ENCODE measurements at regions of chr2 and their contacts with region 1.

Region 1: DNA sequence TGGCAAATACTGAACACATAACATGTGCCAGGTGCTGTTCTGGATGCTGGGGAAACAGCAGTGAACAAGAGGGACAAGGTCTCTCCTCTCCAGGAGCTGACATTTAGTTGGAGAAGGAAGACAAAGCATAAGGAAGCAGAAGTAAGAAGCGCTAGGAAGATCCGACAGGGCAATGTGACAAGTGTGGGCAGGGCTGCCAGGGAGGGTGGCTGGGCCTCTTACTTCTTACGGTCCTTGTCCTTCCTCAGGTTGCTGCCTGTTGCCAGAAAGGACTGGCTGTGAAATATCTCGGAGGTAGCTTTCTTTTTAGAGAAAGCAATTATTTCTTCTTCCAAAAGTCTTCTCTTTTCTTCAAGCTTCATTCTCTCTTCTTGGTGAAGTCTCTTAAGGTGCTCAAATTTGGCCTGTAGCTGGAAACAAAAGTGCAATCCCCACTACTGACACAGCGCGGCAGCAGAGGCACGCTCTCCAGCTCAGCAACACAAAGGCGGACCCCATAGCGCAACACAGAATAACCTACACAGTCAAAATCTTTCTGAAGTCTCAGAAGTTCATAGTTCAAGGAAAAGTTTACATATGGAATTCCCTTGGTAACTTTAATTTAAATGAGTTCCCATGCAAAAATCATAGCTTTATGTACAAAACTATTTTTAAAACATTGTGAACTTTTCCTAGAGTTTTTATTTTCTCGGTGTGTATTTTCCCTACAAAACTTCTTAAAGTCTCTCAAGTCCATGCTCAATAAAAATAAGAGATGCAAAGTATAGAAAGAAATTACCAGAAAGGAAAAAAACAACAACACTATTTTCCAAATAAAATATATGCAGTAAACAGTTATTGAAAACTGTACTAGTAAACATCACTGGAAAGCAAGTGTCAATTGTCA is 67.7 kb downstream of the SEPTIN10 start:
- DNase-seq: peak; percentile 67
- ATAC-seq: peak; percentile 93
- H3K4me3 Mint-ChIP-seq: no peak overlapping the region
- H3K27ac Mint-ChIP-seq: no peak overlapping the region
- H3K4me1 Mint-ChIP-seq: no peaks in the 10 kb centered on the region
- H3K27me3 Mint-ChIP-seq: no peaks in the 10 kb centered on the region
- CTCF ChIP-seq: peak; percentile 74

Region 2: DNA sequence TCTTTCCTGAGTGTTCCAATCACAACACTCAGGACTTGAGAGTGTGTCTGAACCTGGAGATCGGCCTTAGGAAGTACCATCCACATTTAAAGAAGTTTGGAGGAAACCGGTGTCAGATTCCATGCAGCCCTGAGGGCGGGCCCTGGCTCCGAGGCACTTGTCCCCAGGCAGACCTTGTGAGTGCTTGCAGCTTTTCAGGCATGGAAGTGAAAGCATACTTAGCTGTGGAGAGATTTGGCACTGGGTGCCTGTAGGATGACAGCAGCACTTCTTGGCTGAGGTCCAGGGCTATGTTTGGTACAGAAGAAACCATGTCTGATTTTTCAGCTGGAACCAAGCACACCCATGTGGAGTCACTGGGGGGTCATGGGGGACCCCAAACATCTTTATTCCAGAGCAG is 163.1 kb before region 1 on chr2:
- CTCF ChIA-PET with region 1: no interaction called
- POLR2A ChIA-PET with region 1: no interaction called
- DNase-seq: peak; percentile 20
- ATAC-seq: no peak
- H3K4me3 Mint-ChIP-seq: no peak overlapping the region
- H3K27ac Mint-ChIP-seq: no peak overlapping the region
- H3K4me1 Mint-ChIP-seq: peaks cover 43% of the 10 kb centered on the region
- H3K27me3 Mint-ChIP-seq: peaks cover 6% of the 10 kb centered on the region
- CTCF ChIP-seq: no peak

Region 3: DNA sequence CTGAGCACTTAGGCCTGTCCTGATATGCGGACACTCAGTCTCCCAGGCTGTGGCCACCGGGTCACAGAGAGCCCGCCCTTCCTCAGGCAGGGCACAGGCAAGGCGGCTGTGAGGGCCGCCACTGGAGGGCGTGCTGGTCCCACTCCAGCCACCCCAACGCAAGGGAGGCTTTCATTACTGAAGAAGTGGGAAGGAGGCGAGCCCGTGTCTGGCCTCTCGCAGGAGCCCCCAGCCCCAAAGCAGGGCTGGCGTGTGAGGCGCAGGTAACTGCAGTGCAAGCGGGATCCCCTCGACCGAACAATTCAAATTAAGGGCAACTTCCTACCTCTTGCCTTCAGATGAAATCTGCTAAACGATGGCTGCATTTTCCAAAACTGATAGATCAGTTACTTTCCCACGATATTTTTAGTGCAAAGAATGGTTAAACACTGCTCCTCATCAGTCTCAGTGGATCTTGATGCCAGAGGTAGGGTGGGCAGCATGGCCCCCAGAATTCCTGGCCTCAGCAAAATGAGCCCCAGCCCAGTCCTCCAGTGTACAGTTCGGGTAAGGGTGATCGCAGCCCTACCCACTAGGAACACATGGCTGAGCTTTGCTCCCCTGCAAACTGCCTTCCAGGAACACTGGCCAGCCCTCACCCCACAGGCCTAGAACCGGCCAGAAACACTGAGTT is 29.5 kb before region 1 on chr2:
- CTCF ChIA-PET with region 1: interaction called, 14 read pairs
- POLR2A ChIA-PET with region 1: no interaction called
- DNase-seq: peak; percentile 87
- ATAC-seq: peak; percentile 97
- H3K4me3 Mint-ChIP-seq: no peak overlapping the region
- H3K27ac Mint-ChIP-seq: no peak overlapping the region
- H3K4me1 Mint-ChIP-seq: peaks cover 3% of the 10 kb centered on the region; the same call in 1 of the 2 replicates
- H3K27me3 Mint-ChIP-seq: no peaks in the 10 kb centered on the region
- CTCF ChIP-seq: peak; percentile 45

Region 4: DNA sequence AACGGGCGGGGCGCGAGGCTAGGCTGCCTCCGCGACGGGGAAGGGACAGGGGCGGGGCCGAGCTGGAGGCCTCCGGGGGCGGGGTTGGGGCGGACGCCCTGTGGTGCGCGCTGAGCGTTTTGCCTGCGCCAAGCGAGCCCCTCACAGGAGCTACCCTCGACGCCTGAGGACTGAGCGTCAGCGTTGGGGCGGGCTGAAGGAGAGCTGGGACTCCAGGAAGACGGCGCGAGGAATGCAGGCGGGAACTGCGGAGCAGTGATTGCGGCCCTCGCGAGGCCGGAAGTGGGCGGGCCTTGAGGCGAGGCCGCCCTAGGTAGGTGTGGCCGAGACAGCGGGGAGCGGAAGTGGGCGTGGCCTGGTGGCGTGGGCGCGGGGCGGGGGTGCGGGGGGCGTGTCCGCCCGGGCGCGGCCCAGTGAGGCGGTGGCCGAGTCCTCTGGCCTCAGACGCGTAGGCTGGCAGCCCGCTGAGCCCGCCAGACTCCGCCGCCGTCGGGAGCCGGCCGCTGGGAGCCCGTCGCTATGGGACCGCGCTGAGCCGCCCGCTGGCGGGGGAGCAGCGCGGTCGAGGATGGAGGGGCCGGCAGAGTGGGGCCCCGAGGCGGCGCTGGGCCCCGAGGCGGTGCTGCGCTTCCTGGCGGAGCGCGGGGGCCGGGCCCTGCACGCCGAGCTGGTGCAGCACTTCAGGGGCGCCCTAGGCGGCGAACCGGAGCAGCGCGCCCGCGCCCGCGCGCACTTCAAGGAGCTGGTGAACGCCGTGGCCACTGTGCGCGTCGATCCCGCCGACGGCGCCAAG is 68.0 kb after region 1 on chr2 and contains the starts of genes SEPTIN10 and SOWAHC:
- CTCF ChIA-PET with region 1: interaction called, 20 read pairs
- POLR2A ChIA-PET with region 1: interaction called, 4 read pairs
- DNase-seq: peak; percentile 96
- ATAC-seq: peak; percentile 93
- H3K4me3 Mint-ChIP-seq: peak within 1 kb of the TSS; percentile 97
- H3K27ac Mint-ChIP-seq: peak within 1 kb of the TSS; percentile 98
- H3K4me1 Mint-ChIP-seq: peaks cover 44% of the 10 kb centered on the region
- H3K27me3 Mint-ChIP-seq: peaks cover 14% of the 10 kb centered on the region
- CTCF ChIP-seq: no peak
- total RNA-seq, gene SEPTIN10: 86.8 to 92.1 TPM (median 90.1 TPM) in 3 replicates
- total RNA-seq, gene SOWAHC: 14.2 to 18.6 TPM (median 14.5 TPM) in 3 replicates

Region 5: DNA sequence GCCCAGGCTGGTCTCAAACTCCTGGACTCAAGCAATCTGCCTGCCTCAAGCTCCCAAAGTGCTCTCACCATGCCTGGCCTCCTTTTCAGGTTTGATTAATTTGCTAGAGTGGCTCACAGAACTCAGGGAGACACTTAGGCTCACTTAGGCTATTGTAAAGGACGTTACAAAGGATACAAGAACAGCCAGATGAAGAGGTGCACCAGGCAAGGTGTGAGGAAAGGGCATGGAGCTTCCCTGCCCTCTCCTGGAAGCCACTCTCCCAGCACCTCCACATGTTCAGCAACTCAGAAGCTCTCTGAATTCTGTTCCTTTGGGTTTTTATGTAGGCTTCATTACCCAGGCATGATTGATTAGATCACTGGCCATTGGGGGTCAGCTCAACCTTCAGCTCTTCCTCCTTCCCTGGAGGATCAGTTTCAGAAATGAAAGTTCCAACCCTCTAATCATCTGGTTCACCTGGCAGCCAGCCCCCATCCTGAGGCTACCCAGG is 169.3 kb after region 1 on chr2:
- CTCF ChIA-PET with region 1: interaction called, 60 read pairs
- POLR2A ChIA-PET with region 1: no interaction called
- DNase-seq: peak; percentile 25
- ATAC-seq: peak; percentile 75
- H3K4me3 Mint-ChIP-seq: no peak overlapping the region
- H3K27ac Mint-ChIP-seq: no peak overlapping the region
- H3K4me1 Mint-ChIP-seq: peaks cover 1% of the 10 kb centered on the region; the same call in 1 of the 2 replicates
- H3K27me3 Mint-ChIP-seq: no peaks in the 10 kb centered on the region
- CTCF ChIP-seq: no peak

Region 6: DNA sequence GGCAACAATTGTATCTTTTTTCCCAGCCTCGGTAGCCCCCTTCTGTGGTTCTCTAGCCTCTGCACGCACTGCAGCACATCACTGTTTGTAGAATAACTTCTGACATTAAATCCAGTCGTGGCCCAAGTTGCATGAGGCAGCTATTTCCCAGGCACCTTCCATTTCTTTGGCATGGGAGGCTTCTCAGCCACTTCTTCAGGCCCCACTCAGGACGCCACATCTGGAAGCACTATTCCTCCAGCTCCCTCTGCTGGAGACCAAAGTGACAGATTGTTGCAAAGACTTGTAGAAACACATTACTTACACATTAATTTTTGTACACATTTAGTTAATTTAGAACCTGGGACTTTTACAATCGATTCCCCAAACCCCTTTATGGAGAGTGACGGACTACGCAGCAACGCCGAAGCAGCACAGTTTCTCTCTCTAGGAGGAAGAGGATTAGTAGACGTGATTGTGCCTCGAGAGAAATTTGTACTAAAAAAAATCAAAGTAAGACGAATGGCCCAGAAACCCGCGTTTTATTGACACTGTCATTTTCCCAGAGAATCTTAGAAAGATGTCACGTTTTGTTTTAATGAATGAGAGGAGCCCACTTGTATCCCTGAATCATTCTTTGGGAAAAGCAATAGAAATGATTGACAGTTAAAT is 190.2 kb after region 1 on chr2:
- CTCF ChIA-PET with region 1: interaction called, 27 read pairs
- POLR2A ChIA-PET with region 1: no interaction called
- DNase-seq: peak; percentile 43
- ATAC-seq: peak; percentile 43
- H3K4me3 Mint-ChIP-seq: no peak overlapping the region
- H3K27ac Mint-ChIP-seq: no peak overlapping the region
- H3K4me1 Mint-ChIP-seq: no peaks in the 10 kb centered on the region
- H3K27me3 Mint-ChIP-seq: no peaks in the 10 kb centered on the region; the same call in 1 of the 2 replicates
- CTCF ChIP-seq: peak; percentile 32

Measured in WTC11 (cell line).